ENCODE measurements at regions of chr4 and their contacts with region 1.

Region 1: GRCh38 chr4:128863312-128864075 is 54.0 kb downstream of the JADE1 start:
- DNase-seq: peak; percentile 77
- H3K4me3 ChIP-seq: no peak overlapping the region
- H3K27ac ChIP-seq: no peak overlapping the region
- H3K4me1 ChIP-seq: peaks cover 0 to 13% (median 8%) of the 10 kb centered on the region in 4 donors
- H3K27me3 ChIP-seq: no peaks in the 10 kb centered on the region
- CTCF ChIP-seq: peak; percentile 86 to 91 (median 89)
- EP300 ChIP-seq: no peak
- POLR2A ChIP-seq: no peak

Region 2: DNA sequence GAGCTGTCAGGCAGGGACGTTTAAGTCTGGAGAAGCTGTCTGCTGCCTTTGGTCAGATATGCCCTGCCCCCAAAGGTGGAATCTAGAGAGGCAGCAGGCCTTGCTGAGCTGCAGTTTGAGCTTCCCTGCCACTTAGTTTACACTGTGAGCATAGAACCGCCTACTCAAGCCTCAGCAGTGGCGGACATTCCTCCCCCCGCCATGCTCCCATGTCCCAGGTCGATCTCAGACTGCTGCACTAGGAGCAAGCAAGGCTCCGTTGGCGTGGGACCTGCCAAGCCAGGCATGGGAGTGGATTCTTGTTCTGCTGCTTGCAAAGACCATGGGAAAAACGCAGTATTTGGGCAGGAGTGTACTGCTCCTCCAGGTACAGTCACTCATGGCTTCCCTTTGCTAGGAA is 958.5 kb before region 1 on chr4:
- in situ Hi-C with region 1: no loop called
- intact Hi-C with region 1: no loop called
- DNase-seq: no peak
- H3K4me3 ChIP-seq: no peak overlapping the region
- H3K27ac ChIP-seq: no peak overlapping the region
- H3K4me1 ChIP-seq: no peaks in the 10 kb centered on the region
- H3K27me3 ChIP-seq: no peaks in the 10 kb centered on the region
- CTCF ChIP-seq: no peak
- EP300 ChIP-seq: no peak
- POLR2A ChIP-seq: no peak

Region 3: GRCh38 chr4:128191115-128191781 is 672.2 kb before region 1 on chr4:
- in situ Hi-C with region 1: loop called in 3 of 4 experiments (anchors 5 to 10 kb)
- intact Hi-C with region 1: loop called (anchors 10 kb)
- DNase-seq: peak; percentile 60
- H3K4me3 ChIP-seq: no peak overlapping the region
- H3K27ac ChIP-seq: no peak overlapping the region
- H3K4me1 ChIP-seq: peaks cover 0 to 8% (median 0%) of the 10 kb centered on the region in 4 donors
- H3K27me3 ChIP-seq: no peaks in the 10 kb centered on the region
- CTCF ChIP-seq: peak; percentile 80 to 87 (median 85)
- EP300 ChIP-seq: no peak
- POLR2A ChIP-seq: no peak

Region 4: GRCh38 chr4:128454281-128455075 is 409.0 kb before region 1 on chr4:
- in situ Hi-C with region 1: no loop called
- intact Hi-C with region 1: loop called (anchors 5 kb)
- DNase-seq: peak; percentile 73
- H3K4me3 ChIP-seq: no peak overlapping the region
- H3K27ac ChIP-seq: no peak overlapping the region
- H3K4me1 ChIP-seq: peaks cover 0 to 10% (median 0%) of the 10 kb centered on the region in 4 donors
- H3K27me3 ChIP-seq: no peaks in the 10 kb centered on the region
- CTCF ChIP-seq: peak; percentile 66 to 72 (median 69)
- EP300 ChIP-seq: no peak
- POLR2A ChIP-seq: no peak

Region 5: GRCh38 chr4:128565565-128566186 is 297.8 kb before region 1 on chr4:
- in situ Hi-C with region 1: loop called (anchors 10 kb)
- intact Hi-C with region 1: loop called (anchors 5 kb)
- DNase-seq: peak; percentile 54
- H3K4me3 ChIP-seq: no peak overlapping the region
- H3K27ac ChIP-seq: no peak overlapping the region
- H3K4me1 ChIP-seq: peaks cover 4 to 10% (median 5%) of the 10 kb centered on the region in 4 donors
- H3K27me3 ChIP-seq: no peaks in the 10 kb centered on the region
- CTCF ChIP-seq: peak; percentile 54 to 63 (median 57)
- EP300 ChIP-seq: no peak
- POLR2A ChIP-seq: no peak

Region 6: GRCh38 chr4:128574706-128575105 is 288.8 kb before region 1 on chr4:
- in situ Hi-C with region 1: loop called (anchors 10 kb)
- intact Hi-C with region 1: loop called (anchors 5 kb)
- DNase-seq: peak; percentile 84
- H3K4me3 ChIP-seq: no peak overlapping the region
- H3K27ac ChIP-seq: no peak overlapping the region
- H3K4me1 ChIP-seq: peaks cover 0 to 29% (median 10%) of the 10 kb centered on the region in 4 donors
- H3K27me3 ChIP-seq: no peaks in the 10 kb centered on the region
- CTCF ChIP-seq: peak; percentile 57 to 65 (median 64)
- EP300 ChIP-seq: no peak
- POLR2A ChIP-seq: no peak

Region 7: DNA sequence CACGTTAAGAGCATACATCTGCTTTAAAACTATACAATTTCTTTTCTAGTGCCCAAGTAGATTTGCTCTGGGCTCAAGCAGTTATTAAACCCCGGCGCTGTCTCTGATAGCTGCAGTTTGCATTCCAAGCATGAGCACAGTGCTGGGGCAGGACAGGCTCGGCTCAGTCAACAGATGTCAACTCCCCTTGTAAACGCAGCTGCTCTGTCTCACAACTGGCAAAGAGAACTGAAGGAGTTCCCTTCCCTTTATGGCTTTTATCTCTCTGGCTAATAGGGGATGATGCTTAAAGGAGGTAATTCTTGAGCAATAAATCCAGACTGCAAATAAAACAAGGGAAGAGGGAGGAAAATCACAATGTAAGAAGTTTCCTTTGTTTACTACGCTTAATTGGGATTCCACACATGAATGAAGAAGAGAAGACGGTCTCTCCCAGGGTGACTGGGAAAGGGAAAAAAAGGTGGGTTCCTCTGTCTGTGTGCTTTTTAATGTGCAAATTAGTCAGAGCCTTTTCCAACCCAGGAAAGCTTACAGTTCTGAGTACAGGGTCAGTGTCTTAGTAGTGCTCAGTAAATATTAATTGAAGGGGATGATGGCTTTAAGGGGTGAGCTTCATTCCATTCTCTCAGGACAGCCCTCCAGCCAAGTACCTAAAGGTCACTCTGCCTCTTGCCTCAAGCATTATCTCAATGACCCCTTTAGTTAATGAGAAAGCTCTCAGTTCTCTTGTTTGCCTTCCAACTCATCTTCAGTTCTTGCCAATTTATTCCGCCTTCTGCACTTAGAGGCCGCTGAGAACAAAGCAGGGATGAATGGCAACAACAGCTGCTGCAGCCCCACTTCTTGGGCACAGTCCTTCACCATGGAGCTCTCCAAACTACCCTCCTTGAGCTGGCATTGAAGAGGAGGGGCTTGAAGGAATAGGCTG is 209.7 kb before region 1 on chr4:
- in situ Hi-C with region 1: no loop called
- intact Hi-C with region 1: loop called (anchors 5 kb)
- DNase-seq: peak; percentile 61
- H3K4me3 ChIP-seq: no peak overlapping the region
- H3K27ac ChIP-seq: peak overlapping the region; percentile 29 to 76 (median 70)
- H3K4me1 ChIP-seq: peaks cover 9 to 45% (median 38%) of the 10 kb centered on the region in 4 donors
- H3K27me3 ChIP-seq: no peaks in the 10 kb centered on the region
- CTCF ChIP-seq: no peak
- EP300 ChIP-seq: no peak
- POLR2A ChIP-seq: no peak

Region 8: DNA sequence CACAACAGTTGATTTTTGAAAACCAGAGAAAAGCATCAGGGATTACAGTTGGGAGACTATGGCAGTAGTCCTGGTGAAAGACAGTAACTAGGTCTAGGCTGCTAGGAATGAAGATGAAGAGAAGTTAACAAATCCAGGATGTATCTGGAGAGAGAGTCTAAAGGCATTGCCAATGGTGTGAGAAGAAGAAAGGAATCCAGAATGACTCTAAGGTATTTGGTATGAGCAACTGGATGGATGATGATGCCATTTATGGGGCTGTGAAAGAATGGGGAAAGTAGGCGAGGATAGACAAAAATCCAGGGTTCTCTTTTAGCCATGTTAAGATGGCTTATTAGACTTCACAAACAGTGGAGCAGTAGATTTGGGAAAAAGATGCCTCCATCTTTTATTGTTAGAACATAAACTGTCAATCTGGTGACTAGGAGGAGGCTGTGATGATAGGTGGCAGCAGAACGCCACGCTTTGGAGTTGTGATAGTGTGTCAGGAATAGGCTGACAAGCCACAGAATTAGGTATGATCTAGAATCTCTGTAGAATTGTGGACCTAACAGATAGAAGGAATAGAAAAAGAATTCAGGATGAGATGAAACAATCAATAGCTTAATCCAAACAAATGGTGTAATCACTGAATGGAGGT is 81.3 kb before region 1 on chr4:
- in situ Hi-C with region 1: loop called in 1 of 4 experiments (anchors 5 kb)
- intact Hi-C with region 1: no loop called
- DNase-seq: peak; percentile 50
- H3K4me3 ChIP-seq: no peak overlapping the region
- H3K27ac ChIP-seq: no peak overlapping the region
- H3K4me1 ChIP-seq: no peaks in the 10 kb centered on the region
- H3K27me3 ChIP-seq: no peaks in the 10 kb centered on the region
- CTCF ChIP-seq: peak in 2 of 5 experiments; percentile 18 to 19
- EP300 ChIP-seq: no peak
- POLR2A ChIP-seq: no peak

Measured in transverse colon (tissue), 4 donors.